ENCODE measurements at regions of chr16 and their contacts with region 1.

Region 1: GRCh38 chr16:2340564-2341455 is at the start of gene ABCA3:
- DNase-seq: peak; percentile 94
- ATAC-seq: peak; percentile 94 to 95
- total RNA-seq, gene ABCA3: 9.6 to 12.4 TPM

Region 2: DNA sequence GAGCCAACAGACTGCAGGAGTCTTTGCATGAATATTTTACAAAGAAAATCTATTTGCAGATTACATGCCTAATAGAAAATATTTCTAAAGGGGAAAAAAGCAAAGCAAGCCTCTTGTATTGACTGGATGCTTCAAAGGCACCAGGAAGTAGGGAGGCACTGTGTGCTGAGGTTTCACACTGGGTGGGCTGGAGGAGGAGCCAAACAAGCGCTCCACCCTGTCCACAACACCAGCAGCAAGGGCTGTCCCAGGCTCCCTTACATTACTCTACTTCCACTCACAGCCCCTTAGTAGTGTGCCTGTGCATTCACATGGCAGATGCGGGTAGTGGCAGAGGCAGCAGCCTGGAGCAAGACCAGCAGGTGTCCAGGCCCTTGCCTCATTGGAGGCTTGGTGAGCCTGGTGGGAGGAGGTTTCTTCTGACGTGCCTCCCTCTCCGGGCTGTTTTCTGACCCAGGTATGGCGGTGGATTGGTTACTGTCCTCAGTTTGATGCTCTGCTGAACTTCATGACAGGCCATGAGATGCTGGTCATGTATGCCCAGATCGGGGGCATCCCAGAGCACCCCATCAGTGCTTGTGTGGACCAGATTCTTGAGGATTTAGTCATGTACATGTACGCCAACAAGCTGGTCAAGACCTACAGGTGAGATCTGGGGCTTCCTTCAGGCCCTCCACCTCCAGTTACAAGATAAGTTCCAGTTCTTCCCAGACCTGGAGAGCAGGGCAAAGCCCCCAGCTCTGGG is 81.5 kb after region 1 on chr16:
- intact Hi-C with region 1: loop called in 1 of 2 experiments (anchors 5 kb)
- DNase-seq: no peak
- ATAC-seq: peak in 1 of 2 donors; percentile 21

Region 3: DNA sequence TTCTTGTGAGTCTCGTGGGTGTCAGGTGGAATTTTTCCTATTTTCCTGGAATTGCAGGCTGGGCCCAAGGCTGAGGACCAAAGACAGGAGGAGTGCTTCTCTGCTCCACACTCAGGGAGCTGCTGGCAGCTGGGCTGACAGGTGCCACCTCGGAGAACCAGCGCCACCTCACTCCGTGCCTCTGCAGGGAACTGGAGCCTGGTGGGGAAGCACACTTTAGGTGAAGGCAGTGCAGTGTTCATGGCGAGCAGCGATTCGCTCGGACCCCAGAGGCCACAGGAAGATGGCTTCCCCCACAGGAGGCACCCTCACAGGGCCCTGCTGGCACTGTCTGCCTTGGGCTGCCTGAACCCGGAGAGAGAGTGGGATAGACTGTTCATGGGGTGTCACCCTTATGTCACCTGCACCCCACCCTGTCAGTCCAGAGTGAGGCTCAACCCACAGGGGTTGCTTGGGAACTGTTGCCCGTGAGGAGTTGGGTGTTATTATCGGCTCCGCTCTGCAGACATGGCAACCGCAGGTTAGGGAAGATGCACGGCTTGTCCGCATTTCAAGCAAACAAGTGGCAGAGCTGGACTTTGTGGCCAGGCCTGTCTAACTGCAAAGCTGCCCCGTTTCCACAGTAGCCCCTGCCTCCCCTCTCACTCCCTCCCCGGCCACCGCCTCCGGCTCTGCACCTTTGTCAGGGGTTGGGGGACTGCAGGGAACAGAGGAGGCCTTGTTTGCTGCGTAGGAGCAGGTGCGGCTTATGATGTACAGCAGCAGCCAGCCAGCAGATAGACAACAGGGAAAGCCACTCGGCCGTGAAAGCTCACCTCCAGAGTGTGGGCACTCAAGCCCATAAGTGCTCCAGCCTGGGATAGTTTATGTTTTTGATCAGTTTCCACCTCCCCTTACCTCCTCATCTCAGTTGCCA is 149.6 kb after region 1 on chr16:
- intact Hi-C with region 1: loop called in 1 of 2 experiments (anchors 5 kb)
- DNase-seq: no peak
- ATAC-seq: no peak

Region 4: DNA sequence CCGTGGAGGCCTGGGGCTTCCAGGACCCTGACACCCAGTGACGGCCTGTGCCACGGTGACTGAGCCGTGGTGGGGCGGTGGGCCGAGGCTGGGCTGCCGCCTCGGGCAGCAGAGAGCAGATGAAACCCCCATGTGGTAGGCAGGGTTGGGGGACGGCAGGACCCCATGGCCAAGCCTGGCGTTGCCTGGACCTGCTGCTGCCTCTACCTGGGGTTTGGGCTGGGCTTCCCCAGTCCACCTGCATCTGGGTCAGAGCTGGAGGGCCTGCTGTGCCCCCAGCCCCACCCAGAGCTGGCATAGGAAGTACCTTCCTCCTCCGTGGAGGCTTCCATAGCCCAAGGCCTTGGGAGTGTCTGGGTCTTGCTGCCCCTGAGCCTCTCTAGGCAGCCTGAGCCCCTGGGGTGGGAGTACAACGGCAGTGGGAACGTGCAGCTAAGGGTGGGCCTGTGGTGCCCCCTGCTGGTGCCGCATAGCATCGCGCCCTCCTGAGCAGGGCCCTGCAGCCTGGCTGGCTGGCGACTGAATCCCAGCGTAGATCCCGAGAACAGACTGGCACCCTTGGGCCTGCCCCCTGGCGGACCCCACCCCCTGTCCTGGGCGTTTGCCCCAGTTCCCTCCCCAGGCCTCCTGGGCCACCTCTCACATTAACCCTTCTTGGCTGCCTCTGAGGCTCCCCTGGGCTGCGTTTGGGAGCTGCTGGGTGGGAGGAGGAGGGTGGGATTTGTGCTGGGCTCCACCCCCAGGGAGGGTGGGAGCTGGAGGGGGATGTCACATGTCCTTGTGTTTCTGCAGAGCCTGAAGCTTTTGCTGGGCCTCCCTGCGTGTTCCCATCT is 160.3 kb after region 1 on chr16:
- intact Hi-C with region 1: loop called in 1 of 2 experiments (anchors 2 kb)
- DNase-seq: peak; percentile 81
- ATAC-seq: peak; percentile 83

Region 5: DNA sequence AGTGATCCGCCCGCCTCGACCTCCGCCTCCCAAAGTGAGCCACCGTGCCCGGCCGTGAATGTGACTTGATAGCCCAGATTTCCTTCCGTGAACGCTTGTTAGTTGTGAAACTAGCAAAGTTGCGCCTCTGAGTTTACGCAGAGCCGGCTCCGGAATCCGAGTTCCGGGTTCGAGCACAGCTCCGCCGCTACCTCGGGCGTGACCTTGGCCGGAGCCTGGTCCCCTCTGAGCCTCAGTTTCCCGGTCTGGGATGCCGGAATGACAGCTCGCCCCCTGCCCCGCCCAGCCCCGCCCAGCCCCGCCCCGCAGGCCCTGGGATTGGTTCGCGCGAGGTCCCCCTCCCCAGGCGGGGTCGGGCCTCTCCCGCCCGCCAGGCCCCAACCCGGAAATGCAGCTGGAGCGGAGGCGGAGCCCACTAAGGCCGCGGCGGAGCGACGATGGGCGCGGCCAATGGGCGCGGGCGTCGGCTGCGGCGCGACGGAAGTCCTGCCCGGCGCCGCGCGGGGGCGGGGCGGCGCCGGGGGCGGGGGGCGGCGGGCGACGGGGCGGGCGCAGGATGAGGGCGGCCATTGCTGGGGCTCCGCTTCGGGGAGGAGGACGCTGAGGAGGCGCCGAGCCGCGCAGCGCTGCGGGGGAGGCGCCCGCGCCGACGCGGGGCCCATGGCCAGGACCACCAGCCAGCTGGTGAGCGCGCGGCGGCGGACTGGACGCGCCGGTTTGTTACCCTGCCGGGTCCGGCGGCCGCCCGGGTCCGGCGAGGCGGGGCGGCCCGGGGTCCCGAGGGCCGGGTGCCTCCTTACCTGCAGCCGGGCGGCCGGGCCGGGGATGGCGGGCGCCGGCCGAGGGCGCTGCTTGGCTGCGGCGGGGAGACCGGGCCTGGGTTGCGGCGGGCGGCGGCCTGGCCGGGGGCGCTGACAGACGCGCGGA is 196.9 kb after region 1 on chr16 and contains the start of gene PDPK1:
- intact Hi-C with region 1: no loop called
- DNase-seq: peak; percentile 95
- ATAC-seq: peak; percentile 93 to 95
- total RNA-seq, gene PDPK1: 32.6 to 39.4 TPM